Vagina (tissue), 2 donors: ENCODE measurements at regions of chr19 and their contacts with region 1.

Region 1: DNA sequence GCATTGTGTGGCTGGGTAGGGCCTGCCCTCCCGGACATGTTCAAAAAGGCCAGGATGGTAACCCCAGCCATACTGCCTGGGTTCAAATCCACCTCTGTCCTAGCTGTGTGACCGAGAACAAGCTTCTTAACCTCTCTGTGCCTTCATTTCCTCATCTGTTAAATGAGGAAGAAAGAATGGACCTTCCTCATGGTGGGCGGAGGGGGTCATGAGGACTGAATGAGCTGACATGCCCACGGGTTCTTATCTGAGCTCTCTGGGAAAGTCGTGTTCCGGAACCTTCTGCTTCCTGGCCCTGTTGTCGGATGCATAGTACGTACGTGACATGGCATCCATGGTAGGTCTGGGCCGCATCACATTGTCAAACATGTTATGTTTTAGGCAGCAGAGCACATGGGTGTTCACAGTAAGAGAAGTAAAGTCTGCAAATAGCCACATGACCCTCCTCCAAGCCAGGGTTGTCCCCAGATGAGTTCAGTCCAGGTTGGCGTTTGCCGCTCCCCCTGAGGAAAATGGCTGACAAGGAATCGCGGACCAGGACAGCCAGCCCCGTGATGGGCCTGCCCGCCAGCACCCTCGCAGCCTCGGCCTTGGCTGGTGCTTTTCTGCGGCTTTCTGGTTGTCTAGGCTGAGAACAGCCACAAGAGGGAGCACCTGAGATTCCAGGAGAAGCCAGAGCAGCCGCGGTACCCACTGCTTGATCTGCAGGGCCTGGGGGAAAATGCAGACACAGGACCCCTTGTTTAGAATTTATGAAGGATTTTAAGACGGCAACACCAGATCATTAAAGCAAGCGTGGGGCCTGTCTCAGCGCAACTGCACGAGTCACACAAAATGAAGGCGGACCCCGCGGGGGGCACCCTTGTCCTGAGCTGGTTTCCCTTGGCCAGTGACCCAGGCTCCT is 2.4 kb upstream of the NTN5 start:
- DNase-seq: no peak
- H3K4me3 ChIP-seq: no peak overlapping the region
- H3K27ac ChIP-seq: no peak overlapping the region
- H3K4me1 ChIP-seq: peaks cover 10% of the 10 kb centered on the region
- H3K27me3 ChIP-seq: no peaks in the 10 kb centered on the region
- CTCF ChIP-seq: peak; percentile 73 to 85 (median 76)
- POLR2A ChIP-seq: no peak

Region 2: GRCh38 chr19:48738557-48739399 is 63.6 kb after region 1 on chr19:
- intact Hi-C with region 1: loop called (anchors 10 kb)
- DNase-seq: no peak
- H3K4me3 ChIP-seq: peak overlapping the region; percentile 57 to 65
- H3K27ac ChIP-seq: peak overlapping the region; percentile 88
- H3K4me1 ChIP-seq: peaks cover 26% of the 10 kb centered on the region
- H3K27me3 ChIP-seq: no peaks in the 10 kb centered on the region
- CTCF ChIP-seq: no peak
- POLR2A ChIP-seq: peak in 1 of 2 donors; percentile 32

Region 3: DNA sequence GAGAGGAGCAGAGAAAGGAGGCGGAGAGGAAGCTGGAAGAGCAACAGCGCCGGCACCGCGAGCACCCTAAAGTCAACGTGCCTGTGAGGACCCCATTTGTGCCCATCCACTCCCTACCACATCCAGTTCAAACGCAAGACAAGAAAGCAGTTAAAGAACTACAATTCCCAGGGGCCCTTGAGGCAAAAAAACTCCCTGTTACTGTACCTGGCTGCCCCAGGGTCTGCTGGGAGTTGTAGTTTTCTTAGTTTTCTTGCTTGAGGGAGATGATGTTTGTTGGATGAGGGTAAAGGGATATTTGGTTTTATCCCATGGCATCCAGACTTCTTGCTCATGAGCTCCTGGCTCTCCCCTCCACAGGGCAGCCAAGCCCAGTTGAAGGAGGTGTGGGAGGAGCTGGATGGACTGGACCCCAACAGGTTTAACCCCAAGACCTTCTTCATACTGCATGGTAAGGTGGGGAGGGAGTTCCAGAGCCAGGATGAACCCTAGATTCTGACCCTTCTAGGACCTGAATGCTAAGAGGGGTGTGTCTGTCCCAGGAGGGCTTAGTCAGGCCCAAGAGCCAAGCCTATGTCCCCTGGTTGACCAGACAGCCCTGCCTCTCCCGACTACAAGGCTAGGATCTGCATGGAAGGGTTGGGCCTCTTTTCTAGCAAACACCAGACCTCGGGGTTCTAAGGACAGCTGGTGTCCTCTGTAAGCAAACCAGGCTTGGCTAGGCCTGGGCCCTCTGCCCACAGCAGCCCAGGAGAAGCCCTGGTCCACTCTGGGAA is 238.1 kb after region 1 on chr19:
- intact Hi-C with region 1: no loop called
- DNase-seq: no peak
- H3K4me3 ChIP-seq: no peak overlapping the region
- H3K27ac ChIP-seq: no peak overlapping the region
- H3K4me1 ChIP-seq: no peaks in the 10 kb centered on the region
- H3K27me3 ChIP-seq: no peaks in the 10 kb centered on the region
- CTCF ChIP-seq: no peak
- POLR2A ChIP-seq: no peak